Transverse colon (tissue), 4 donors: ENCODE measurements at regions of chr20 and their contacts with region 1.

Region 1: DNA sequence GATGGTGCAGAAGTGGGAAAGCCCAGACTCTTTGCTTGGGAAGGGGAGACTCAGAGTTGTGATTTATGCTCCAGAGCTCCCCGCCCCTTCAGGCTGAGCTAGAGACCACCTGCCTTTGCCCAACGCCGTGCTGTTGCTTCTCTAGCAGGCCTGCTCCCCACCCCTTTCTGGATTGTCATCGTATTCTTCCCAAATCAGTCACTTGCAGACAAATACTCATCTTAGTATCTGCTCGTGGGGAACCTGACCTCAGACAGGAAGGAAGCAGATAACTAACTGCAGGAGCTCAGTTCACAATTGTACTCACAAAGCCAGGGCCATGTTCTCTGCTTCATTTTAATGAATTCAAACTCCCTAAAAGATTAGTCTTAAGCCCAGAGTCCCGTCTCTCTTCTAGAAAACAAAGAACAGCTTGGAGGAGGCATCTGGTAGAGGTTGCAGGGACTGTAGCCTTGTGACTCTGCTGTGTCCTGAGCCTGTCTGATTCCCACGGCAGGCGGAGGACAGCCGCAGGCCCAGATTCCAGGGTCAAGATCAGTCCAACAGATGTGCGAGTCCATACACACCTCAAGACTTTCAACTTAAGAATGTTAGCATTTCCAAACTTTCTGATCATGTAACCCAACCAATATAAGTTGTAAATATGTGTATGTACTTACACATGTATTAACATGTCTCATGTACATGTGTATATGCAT is 57.2 kb upstream of the GGTLC1 start:
- DNase-seq: no peak
- H3K4me3 ChIP-seq: no peak overlapping the region
- H3K27ac ChIP-seq: no peak overlapping the region
- H3K4me1 ChIP-seq: no peaks in the 10 kb centered on the region
- H3K27me3 ChIP-seq: no peaks in the 10 kb centered on the region
- CTCF ChIP-seq: no peak
- EP300 ChIP-seq: no peak
- POLR2A ChIP-seq: no peak

Region 2: GRCh38 chr20:22626496-22626895 is 1419.3 kb before region 1 on chr20:
- in situ Hi-C with region 1: no loop called
- intact Hi-C with region 1: loop called (anchors 5 kb)
- DNase-seq: no peak
- H3K4me3 ChIP-seq: no peak overlapping the region
- H3K27ac ChIP-seq: no peak overlapping the region
- H3K4me1 ChIP-seq: no peaks in the 10 kb centered on the region
- H3K27me3 ChIP-seq: no peaks in the 10 kb centered on the region
- CTCF ChIP-seq: no peak
- EP300 ChIP-seq: no peak
- POLR2A ChIP-seq: no peak

Region 3: GRCh38 chr20:23841693-23842092 is 204.1 kb before region 1 on chr20:
- in situ Hi-C with region 1: no loop called
- intact Hi-C with region 1: no loop called
- DNase-seq: no peak
- H3K4me3 ChIP-seq: no peak overlapping the region
- H3K27ac ChIP-seq: no peak overlapping the region
- H3K4me1 ChIP-seq: no peaks in the 10 kb centered on the region
- H3K27me3 ChIP-seq: no peaks in the 10 kb centered on the region
- CTCF ChIP-seq: no peak
- EP300 ChIP-seq: no peak
- POLR2A ChIP-seq: no peak

Region 4: DNA sequence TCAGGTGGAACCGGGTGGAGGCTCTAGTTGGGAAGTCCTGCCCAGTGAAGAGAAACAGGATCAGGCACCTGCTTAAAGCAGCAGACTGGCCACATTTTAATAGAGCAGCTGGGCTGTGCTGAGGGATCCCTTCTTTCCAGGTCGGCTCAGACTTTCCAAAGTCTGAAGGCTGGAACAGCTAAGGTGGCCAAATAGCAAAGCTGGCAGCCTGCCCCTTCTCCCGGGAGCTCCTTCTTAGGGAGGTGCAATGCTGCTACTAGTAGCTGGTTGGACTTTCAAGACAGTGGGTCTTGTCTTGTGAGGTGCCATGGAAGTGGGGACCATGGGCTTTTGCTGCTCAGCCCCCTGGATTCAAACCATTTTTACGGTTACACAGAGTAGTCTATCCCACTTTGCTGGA is 135.6 kb before region 1 on chr20:
- in situ Hi-C with region 1: no loop called
- intact Hi-C with region 1: no loop called
- DNase-seq: no peak
- H3K4me3 ChIP-seq: no peak overlapping the region
- H3K27ac ChIP-seq: no peak overlapping the region
- H3K4me1 ChIP-seq: no peaks in the 10 kb centered on the region
- H3K27me3 ChIP-seq: no peaks in the 10 kb centered on the region
- CTCF ChIP-seq: no peak
- EP300 ChIP-seq: no peak
- POLR2A ChIP-seq: no peak